ENCODE measurements at regions of chr5 and their contacts with region 1.

Region 1: GRCh38 chr5:66958980-66959641 is 237.5 kb downstream of the CD180 start:
- DNase-seq: no peak
- H3K4me3 ChIP-seq: peak overlapping the region; percentile 48 to 55 (median 50)
- H3K27ac ChIP-seq: peak overlapping the region; percentile 66 to 79 (median 72)
- H3K4me1 ChIP-seq: peaks cover 6 to 32% (median 29%) of the 10 kb centered on the region in 4 donors
- H3K27me3 ChIP-seq: no peaks in the 10 kb centered on the region
- CTCF ChIP-seq: no peak
- EP300 ChIP-seq: no peak
- POLR2A ChIP-seq: no peak

Region 2: GRCh38 chr5:66882592-66883227 is 76.4 kb before region 1 on chr5:
- intact Hi-C with region 1: loop called (anchors 10 kb)
- DNase-seq: no peak
- H3K4me3 ChIP-seq: no peak overlapping the region
- H3K27ac ChIP-seq: peak overlapping the region in 2 of 4 donors; percentile 48 to 52
- H3K4me1 ChIP-seq: peaks cover 17 to 27% (median 26%) of the 10 kb centered on the region in 4 donors
- H3K27me3 ChIP-seq: no peaks in the 10 kb centered on the region
- CTCF ChIP-seq: no peak
- EP300 ChIP-seq: no peak
- POLR2A ChIP-seq: no peak

Measured in esophagus muscularis mucosa (tissue), 4 donors.